Adrenal gland (tissue), 19 donors: ENCODE measurements at regions of chr22 and their contacts with region 1.

Region 1: GRCh38 chr22:29524440-29525191 is 28.9 kb downstream of the THOC5 start:
- DNase-seq: peak; percentile 49 to 80 (median 70)
- H3K4me3 ChIP-seq: no peak overlapping the region
- H3K27ac ChIP-seq: no peak overlapping the region
- H3K4me1 ChIP-seq: peaks cover 3 to 6% of the 10 kb centered on the region in 2 donors
- H3K27me3 ChIP-seq: no peaks in the 10 kb centered on the region
- CTCF ChIP-seq: peak; percentile 29 to 75 (median 67)
- POLR2A ChIP-seq: no peak

Region 2: DNA sequence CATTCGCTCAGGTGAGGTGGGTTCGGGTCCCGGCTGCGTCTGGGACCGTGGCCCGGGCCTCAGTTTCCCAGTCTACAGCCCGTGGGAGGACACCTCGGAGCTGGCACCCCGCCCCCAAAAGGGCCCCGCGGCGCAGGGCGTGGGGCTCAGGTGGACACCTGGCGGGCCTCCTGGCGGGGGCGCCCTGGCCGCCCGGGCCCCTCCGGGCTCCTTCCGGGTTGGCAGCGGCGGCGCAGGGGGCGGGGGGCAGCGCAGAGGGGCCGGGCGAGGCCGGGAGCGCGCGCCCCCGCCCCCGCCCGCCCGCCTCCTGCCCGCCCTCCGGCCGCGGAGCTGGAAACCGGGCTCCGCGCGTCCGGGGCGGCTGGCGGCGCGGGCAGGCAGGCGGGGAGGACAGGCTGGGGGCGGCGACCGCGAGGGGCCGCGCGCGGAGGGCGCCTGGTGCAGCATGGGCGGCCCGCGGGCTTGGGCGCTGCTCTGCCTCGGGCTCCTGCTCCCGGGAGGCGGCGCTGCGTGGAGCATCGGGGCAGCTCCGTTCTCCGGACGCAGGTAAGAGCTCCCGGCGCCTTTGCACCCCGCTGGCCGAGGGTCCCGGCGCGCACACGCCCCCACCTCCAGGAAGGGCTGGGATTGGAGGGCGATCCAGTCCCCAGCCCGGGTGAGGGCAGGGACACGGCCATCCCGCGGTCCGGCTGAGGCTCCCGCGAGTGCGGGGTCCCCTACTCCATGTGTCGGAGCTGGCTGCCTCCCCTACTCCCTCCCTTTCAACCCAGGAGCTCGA is 318.8 kb before region 1 on chr22 and contains the start of gene EMID1:
- intact Hi-C with region 1: no loop called
- DNase-seq: peak in 4 of 7 donors; percentile 46 to 62 (median 58)
- H3K4me3 ChIP-seq: peak within 1 kb of the TSS in 3 of 4 donors; percentile 27 to 90 (median 56)
- H3K27ac ChIP-seq: peak within 1 kb of the TSS in 2 of 5 donors; percentile 17 to 70
- H3K4me1 ChIP-seq: peaks cover 3 to 26% of the 10 kb centered on the region in 2 donors
- H3K27me3 ChIP-seq: no peaks in the 10 kb centered on the region
- CTCF ChIP-seq: peak in 2 of 6 experiments; percentile 13 to 34
- POLR2A ChIP-seq: no peak
- total RNA-seq, gene EMID1: 12.7 to 70.9 (median 42.8) TPM

Region 3: DNA sequence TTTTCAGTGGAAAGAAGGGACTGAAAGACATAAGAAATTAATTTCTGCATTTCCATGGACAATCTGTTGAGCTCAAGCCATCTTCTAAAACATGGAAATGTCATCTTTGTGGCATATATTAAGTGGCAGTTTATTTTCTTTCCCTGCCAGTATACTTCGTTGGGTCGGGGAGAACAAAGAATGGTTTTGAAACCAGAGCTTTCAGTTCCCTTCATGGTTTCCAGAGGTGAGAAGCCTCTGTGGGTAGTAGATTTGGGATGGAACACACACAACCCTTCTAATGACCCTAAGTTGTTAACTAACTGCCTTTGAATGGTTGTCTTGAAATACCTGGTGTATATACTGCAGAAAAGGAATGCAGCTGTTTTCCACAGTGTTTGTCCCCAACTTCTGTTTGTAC is 235.8 kb before region 1 on chr22:
- intact Hi-C with region 1: no loop called
- DNase-seq: no peak
- H3K4me3 ChIP-seq: no peak overlapping the region
- H3K27ac ChIP-seq: no peak overlapping the region
- H3K4me1 ChIP-seq: peaks cover 0 to 11% of the 10 kb centered on the region in 2 donors
- H3K27me3 ChIP-seq: no peaks in the 10 kb centered on the region
- CTCF ChIP-seq: no peak
- POLR2A ChIP-seq: no peak

Region 4: DNA sequence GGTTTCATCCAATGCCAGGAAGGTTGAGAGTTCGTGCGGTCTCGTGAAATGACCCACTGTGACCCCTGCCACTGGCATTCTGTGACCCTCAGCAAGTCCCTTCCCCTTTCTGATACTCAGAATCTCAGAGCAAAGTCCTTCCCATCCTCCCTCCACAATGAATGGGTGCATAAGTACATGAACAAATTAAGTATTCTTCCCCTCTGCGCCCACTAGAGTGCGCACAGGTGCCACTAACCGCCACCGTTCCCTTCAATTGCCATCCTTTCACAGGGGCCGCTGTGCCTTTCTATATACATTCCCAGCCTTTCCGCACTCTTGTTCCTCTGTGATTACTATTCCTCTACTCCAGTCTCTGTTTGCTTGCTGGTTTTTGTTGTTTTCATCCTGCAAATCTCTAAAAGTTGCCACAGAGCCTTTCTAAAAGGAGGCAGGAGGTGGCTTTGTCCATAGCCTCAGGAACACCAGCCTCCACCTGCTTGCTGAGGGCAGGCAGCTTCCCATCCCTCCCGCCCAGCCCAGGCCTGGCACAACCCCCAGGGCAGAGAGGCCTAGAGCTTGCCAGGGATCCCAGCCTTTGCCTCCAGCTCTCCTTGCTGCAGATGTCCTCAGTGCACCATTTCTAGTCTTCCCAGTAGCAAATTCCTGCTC is 129.6 kb before region 1 on chr22:
- intact Hi-C with region 1: loop called (anchors 10 kb)
- DNase-seq: peak; percentile 66 to 89 (median 77)
- H3K4me3 ChIP-seq: no peak overlapping the region
- H3K27ac ChIP-seq: no peak overlapping the region
- H3K4me1 ChIP-seq: peaks cover 0 to 3% of the 10 kb centered on the region in 2 donors
- H3K27me3 ChIP-seq: no peaks in the 10 kb centered on the region
- CTCF ChIP-seq: peak; percentile 71 to 91 (median 84)
- POLR2A ChIP-seq: no peak

Region 5: GRCh38 chr22:29625090-29625825 is 100.6 kb after region 1 on chr22:
- intact Hi-C with region 1: no loop called
- DNase-seq: peak; percentile 51 to 83 (median 65)
- H3K4me3 ChIP-seq: no peak overlapping the region
- H3K27ac ChIP-seq: peak overlapping the region in 2 of 5 donors; percentile 0 to 19
- H3K4me1 ChIP-seq: peaks cover 21 to 30% of the 10 kb centered on the region in 2 donors
- H3K27me3 ChIP-seq: no peaks in the 10 kb centered on the region
- CTCF ChIP-seq: peak; percentile 71 to 82 (median 77)
- POLR2A ChIP-seq: no peak